Naive thymus-derived CD4-positive, alpha-beta T cell (primary cell): ENCODE measurements at regions of chr9 and their contacts with region 1.

Region 1: GRCh38 chr9:129884220-129885017 is 49.2 kb downstream of the USP20 start:
- DNase-seq: peak; percentile 86 to 97 (median 96)
- ATAC-seq: peak; percentile 69
- H3K4me3 ChIP-seq: peak overlapping the region; percentile 58
- H3K4me3 Mint-ChIP-seq: peak overlapping the region; percentile 85 to 98 (median 94)
- H3K27ac ChIP-seq: peak overlapping the region; percentile 99
- H3K27ac Mint-ChIP-seq: peak overlapping the region; percentile 97 to 100 (median 100)
- H3K4me1 ChIP-seq: peaks cover 20 to 37% of the 10 kb centered on the region in 2 donors
- H3K4me1 Mint-ChIP-seq: peaks cover 37 to 57% (median 48%) of the 10 kb centered on the region in 7 donors
- H3K27me3 ChIP-seq: no peaks in the 10 kb centered on the region
- H3K27me3 Mint-ChIP-seq: peaks cover 0 to 4% (median 0%) of the 10 kb centered on the region in 5 donors

Region 2: GRCh38 chr9:129102901-129103594 is 781.4 kb before region 1 on chr9:
- CTCF ChIA-PET with region 1: no interaction called
- POLR2A ChIA-PET with region 1: no interaction called
- intact Hi-C with region 1: no loop called
- DNase-seq: no peak
- ATAC-seq: peak; percentile 60
- H3K4me3 ChIP-seq: no peak overlapping the region
- H3K4me3 Mint-ChIP-seq: no peak overlapping the region
- H3K27ac ChIP-seq: no peak overlapping the region
- H3K27ac Mint-ChIP-seq: no peak overlapping the region
- H3K4me1 ChIP-seq: no peaks in the 10 kb centered on the region
- H3K4me1 Mint-ChIP-seq: peaks cover 0 to 4% (median 0%) of the 10 kb centered on the region in 7 donors
- H3K27me3 ChIP-seq: no peaks in the 10 kb centered on the region
- H3K27me3 Mint-ChIP-seq: no peaks in the 10 kb centered on the region

Region 3: DNA sequence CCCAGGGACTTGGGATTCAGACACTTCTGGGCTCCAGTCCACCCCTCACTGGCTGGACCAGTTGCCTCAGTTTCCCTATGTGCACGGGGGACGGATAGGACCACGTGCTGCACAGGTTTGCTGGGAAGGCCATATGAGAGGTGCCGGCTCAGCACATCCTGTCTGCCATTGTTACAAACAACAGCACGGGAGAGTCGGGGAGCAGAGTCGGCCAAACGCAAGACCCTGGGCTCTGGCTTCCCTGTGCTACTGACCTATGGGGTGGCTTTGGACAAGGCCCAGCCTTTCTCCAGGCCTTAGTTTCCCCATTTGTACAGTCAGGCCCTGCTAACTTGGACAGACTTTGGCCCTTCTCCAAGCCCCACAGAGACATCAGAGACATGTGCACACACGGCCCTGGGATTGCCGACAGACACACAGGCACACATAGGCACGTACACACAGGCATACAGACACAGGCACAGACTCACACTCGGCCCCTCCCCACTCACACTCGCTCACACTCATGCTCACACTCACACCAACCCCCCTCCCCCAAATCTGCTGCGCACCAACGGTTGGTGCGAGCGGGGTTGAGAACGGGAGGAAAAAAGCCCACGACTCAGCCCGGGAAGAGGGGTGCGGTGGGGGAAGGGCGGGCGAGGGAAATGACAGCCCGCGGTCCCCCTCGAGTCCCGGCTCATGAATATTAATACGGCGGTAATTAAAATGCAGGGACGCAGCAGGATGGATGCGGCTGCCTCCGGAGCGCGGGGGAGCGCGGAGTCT is 396.6 kb before region 1 on chr9:
- CTCF ChIA-PET with region 1: no interaction called
- POLR2A ChIA-PET with region 1: no interaction called
- intact Hi-C with region 1: loop called in 1 of 2 experiments (anchors 2 kb)
- DNase-seq: peak in 5 of 9 donors; percentile 29 to 54 (median 43)
- ATAC-seq: peak; percentile 3
- H3K4me3 ChIP-seq: peak overlapping the region; percentile 70
- H3K4me3 Mint-ChIP-seq: peak overlapping the region; percentile 75 to 92 (median 90)
- H3K27ac ChIP-seq: peak overlapping the region; percentile 66
- H3K27ac Mint-ChIP-seq: peak overlapping the region; percentile 87 to 99 (median 94)
- H3K4me1 ChIP-seq: peaks cover 32 to 46% of the 10 kb centered on the region in 2 donors
- H3K4me1 Mint-ChIP-seq: peaks cover 36 to 68% (median 58%) of the 10 kb centered on the region in 7 donors
- H3K27me3 ChIP-seq: no peaks in the 10 kb centered on the region
- H3K27me3 Mint-ChIP-seq: no peaks in the 10 kb centered on the region

Region 4: DNA sequence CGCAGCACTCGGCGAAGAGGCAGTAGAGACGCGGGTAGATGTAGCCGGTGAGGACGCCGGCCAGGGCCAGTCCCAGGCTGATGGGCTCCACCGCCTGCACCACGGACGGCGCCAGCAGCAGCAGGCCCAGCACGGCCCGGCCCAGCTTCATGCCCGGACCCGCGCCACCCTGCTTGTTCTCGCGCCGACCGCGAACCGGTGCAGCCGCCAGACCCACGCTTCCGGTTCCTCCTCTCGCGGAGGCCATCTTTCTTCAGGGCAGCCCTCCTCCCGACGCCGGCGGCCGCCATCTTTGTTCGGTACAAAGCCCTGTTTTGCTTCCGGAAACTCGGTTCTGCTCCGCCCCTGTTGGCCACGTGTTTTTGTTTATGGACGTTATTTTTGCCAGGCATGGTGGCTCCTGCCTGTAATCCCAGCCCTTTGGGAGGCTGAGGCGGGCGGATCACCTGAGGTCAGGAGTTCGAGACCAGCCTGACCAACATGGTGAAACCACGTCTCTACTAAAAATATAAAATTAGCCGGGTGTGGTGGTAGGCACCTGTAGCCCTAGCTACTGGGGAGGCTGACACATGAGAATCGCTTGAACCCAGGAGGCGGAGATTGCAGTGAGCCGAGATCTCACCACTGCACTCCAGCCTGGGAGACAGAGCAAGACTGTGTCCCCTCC is 60.4 kb before region 1 on chr9 and contains the start of gene TOR1A:
- CTCF ChIA-PET with region 1: no interaction called
- POLR2A ChIA-PET with region 1: interaction called, 154 read pairs
- intact Hi-C with region 1: loop called (anchors 1 to 5 kb)
- DNase-seq: peak; percentile 76 to 91 (median 89)
- ATAC-seq: peak; percentile 97
- H3K4me3 ChIP-seq: peak within 1 kb of the TSS; percentile 73
- H3K4me3 Mint-ChIP-seq: peak within 1 kb of the TSS; percentile 83 to 93 (median 90)
- H3K27ac ChIP-seq: peak within 1 kb of the TSS; percentile 78
- H3K27ac Mint-ChIP-seq: peak within 1 kb of the TSS; percentile 65 to 94 (median 84)
- H3K4me1 ChIP-seq: peaks cover 0 to 9% of the 10 kb centered on the region in 2 donors
- H3K4me1 Mint-ChIP-seq: peaks cover 5 to 17% (median 11%) of the 10 kb centered on the region in 7 donors
- H3K27me3 ChIP-seq: no peaks in the 10 kb centered on the region
- H3K27me3 Mint-ChIP-seq: no peaks in the 10 kb centered on the region
- total RNA-seq, gene TOR1A: 13.8 to 52.9 (median 34.7) TPM

Region 5: GRCh38 chr9:129898191-129898590 is 13.8 kb after region 1 on chr9:
- CTCF ChIA-PET with region 1: interaction called, 7 read pairs
- POLR2A ChIA-PET with region 1: interaction called, 34 read pairs
- intact Hi-C with region 1: loop called in 1 of 2 experiments (anchors 1 kb)
- DNase-seq: no peak
- ATAC-seq: no peak
- H3K4me3 ChIP-seq: no peak overlapping the region
- H3K4me3 Mint-ChIP-seq: peak overlapping the region in 2 of 10 donors; percentile 23 to 28
- H3K27ac ChIP-seq: peak overlapping the region; percentile 16
- H3K27ac Mint-ChIP-seq: peak overlapping the region; percentile 56 to 97 (median 88)
- H3K4me1 ChIP-seq: peaks cover 26 to 30% of the 10 kb centered on the region in 2 donors
- H3K4me1 Mint-ChIP-seq: peaks cover 26 to 70% (median 57%) of the 10 kb centered on the region in 7 donors
- H3K27me3 ChIP-seq: no peaks in the 10 kb centered on the region
- H3K27me3 Mint-ChIP-seq: no peaks in the 10 kb centered on the region

Region 6: DNA sequence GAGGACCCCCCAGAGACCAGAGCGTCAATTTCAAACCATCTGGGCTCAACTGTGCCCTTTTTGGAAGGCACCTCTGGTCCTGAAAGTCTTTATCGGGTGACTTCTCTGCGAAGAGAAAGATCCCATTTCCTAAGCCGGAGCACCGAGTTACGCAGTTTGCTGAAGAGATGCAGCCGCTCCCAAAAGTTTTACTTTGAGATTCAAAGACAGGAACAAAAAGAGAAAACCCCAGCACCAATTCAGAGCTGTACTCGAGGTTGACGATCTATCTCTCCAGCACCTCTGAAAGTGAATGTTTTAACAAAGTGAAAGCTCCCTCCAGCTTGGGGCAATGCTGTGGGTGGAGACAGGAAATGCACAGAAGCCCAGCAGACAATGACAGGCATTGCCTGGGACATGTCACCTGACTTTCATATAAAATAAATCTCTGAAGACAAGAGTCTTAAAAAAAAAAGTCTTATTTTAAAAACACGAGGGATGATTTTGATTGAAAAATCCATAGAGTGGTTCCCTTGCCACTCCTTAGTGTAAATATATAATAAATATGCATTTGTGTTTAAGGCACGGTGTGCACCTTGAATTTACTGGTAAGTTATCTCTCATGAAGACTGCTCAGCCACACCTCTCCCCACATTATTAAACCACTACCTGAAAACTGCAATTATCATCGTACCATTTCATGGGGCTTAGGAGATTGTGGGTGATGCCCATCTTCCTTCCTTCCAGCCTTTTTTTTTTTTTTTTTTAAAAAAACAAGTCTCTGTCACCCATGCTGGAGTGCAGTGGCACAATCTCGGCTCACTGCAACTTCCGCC is 78.7 kb after region 1 on chr9:
- CTCF ChIA-PET with region 1: interaction called, 6 read pairs
- POLR2A ChIA-PET with region 1: interaction called, 51 read pairs
- intact Hi-C with region 1: loop called (anchors 1 kb)
- DNase-seq: peak; percentile 23 to 92 (median 87)
- ATAC-seq: peak; percentile 98
- H3K4me3 ChIP-seq: peak overlapping the region; percentile 80
- H3K4me3 Mint-ChIP-seq: peak overlapping the region; percentile 66 to 95 (median 88)
- H3K27ac ChIP-seq: peak overlapping the region; percentile 92
- H3K27ac Mint-ChIP-seq: peak overlapping the region; percentile 89 to 99 (median 97)
- H3K4me1 ChIP-seq: peaks cover 34 to 47% of the 10 kb centered on the region in 2 donors
- H3K4me1 Mint-ChIP-seq: peaks cover 54 to 80% (median 67%) of the 10 kb centered on the region in 7 donors
- H3K27me3 ChIP-seq: no peaks in the 10 kb centered on the region
- H3K27me3 Mint-ChIP-seq: no peaks in the 10 kb centered on the region

Region 7: GRCh38 chr9:130128733-130129431 is 244.5 kb after region 1 on chr9:
- CTCF ChIA-PET with region 1: no interaction called
- POLR2A ChIA-PET with region 1: interaction called, 4 read pairs
- intact Hi-C with region 1: loop called in 1 of 2 experiments (anchors 2 kb)
- DNase-seq: peak in 7 of 9 donors; percentile 13 to 68 (median 21)
- ATAC-seq: peak; percentile 73
- H3K4me3 ChIP-seq: peak overlapping the region; percentile 52
- H3K4me3 Mint-ChIP-seq: peak overlapping the region; percentile 76 to 93 (median 82)
- H3K27ac ChIP-seq: peak overlapping the region; percentile 66
- H3K27ac Mint-ChIP-seq: peak overlapping the region; percentile 89 to 99 (median 95)
- H3K4me1 ChIP-seq: peaks cover 53 to 55% of the 10 kb centered on the region in 2 donors
- H3K4me1 Mint-ChIP-seq: peaks cover 44 to 72% (median 60%) of the 10 kb centered on the region in 7 donors
- H3K27me3 ChIP-seq: no peaks in the 10 kb centered on the region
- H3K27me3 Mint-ChIP-seq: no peaks in the 10 kb centered on the region